HepG2 (cell line): ENCODE measurements at regions of chr6 and their contacts with region 1.

Region 1: GRCh38 chr6:37791156-37791919 is 28.2 kb upstream of the ZFAND3 start:
- DNase-seq: peak; percentile 98
- ATAC-seq: peak; percentile 95
- H3K4me3 ChIP-seq: peak overlapping the region in 2 of 3 experiments; percentile 26 to 55; a peak in 4 of 6 replicates
- H3K27ac ChIP-seq: no peak overlapping the region
- H3K4me1 ChIP-seq: peaks cover 64% of the 10 kb centered on the region
- H3K27me3 ChIP-seq: no peaks in the 10 kb centered on the region
- CTCF ChIP-seq: peak; percentile 99
- EP300 ChIP-seq: peak in 1 of 2 experiments; percentile 78; a peak in 2 of 4 replicates
- POLR2A ChIP-seq: no peak
- RAD21 ChIP-seq: peak; percentile 99

Region 2: DNA sequence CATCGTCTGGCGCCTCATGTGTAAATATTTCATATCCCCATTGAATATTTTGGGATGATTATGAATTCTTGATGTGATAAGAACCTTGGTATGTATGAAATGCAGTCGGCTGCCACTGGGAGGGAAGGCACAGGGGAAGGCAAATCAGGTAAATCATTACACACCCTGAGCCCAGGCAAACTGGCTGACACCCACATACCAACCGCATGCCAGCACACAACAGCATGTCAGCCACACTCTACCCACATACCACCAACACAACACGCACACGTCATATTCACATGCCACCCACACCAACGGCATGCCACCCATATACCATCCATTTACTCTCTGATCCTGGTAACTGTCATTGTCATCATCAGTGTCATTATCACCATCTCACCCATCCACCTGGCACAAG is 65.4 kb before region 1 on chr6:
- CTCF ChIA-PET with region 1: no interaction called
- POLR2A ChIA-PET with region 1: no interaction called
- in situ Hi-C with region 1: no loop called
- intact Hi-C with region 1: no loop called
- DNase-seq: no peak
- ATAC-seq: 0 out of 3 replicates have a peak, but pooled peaks have one; percentile 22
- H3K4me3 ChIP-seq: no peak overlapping the region
- H3K27ac ChIP-seq: no peak overlapping the region
- H3K4me1 ChIP-seq: no peaks in the 10 kb centered on the region
- H3K27me3 ChIP-seq: peaks cover 2 to 6% of the 10 kb centered on the region in 2 experiments; a peak in 3 of 5 replicates
- CTCF ChIP-seq: no peak
- EP300 ChIP-seq: no peak
- POLR2A ChIP-seq: no peak
- RAD21 ChIP-seq: no peak

Region 3: GRCh38 chr6:37741757-37742400 is 49.5 kb before region 1 on chr6:
- CTCF ChIA-PET with region 1: no interaction called
- POLR2A ChIA-PET with region 1: no interaction called
- in situ Hi-C with region 1: no loop called
- intact Hi-C with region 1: loop called (anchors 5 kb)
- DNase-seq: peak; percentile 30
- ATAC-seq: peak; percentile 94
- H3K4me3 ChIP-seq: peak overlapping the region in 2 of 3 experiments; percentile 36 to 38; a peak in 2 of 6 replicates
- H3K27ac ChIP-seq: no peak overlapping the region
- H3K4me1 ChIP-seq: peaks cover 9% of the 10 kb centered on the region
- H3K27me3 ChIP-seq: peaks cover 0 to 32% of the 10 kb centered on the region in 2 experiments; a peak in 2 of 5 replicates
- CTCF ChIP-seq: peak; percentile 70
- EP300 ChIP-seq: no peak
- POLR2A ChIP-seq: no peak
- RAD21 ChIP-seq: peak; percentile 79